ENCODE measurements at regions of chr17 and their contacts with region 1.

Region 1: DNA sequence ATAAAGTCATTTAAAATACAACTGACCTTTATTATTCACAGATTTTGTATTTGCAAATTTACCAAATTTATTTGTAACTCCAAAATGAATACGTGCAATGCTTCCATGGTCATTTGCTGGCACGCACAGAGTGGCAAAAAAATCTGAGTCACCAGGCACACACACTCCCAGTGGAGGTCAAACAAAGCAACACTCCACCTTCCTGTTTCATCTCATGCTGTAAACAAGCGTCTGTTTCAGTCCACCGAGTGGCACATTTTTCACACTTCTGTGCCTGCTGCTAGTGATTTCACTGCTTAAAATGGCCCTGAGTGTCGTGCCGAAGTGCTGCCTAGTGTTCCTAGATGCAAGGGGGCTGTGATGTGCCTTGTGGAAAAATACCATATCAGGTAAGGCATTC is 17.8 kb upstream of the ITGAE start:
- DNase-seq: peak; percentile 46
- H3K4me3 ChIP-seq: no peak overlapping the region
- H3K27ac ChIP-seq: no peak overlapping the region
- H3K4me1 ChIP-seq: no peaks in the 10 kb centered on the region
- H3K27me3 ChIP-seq: no peaks in the 10 kb centered on the region

Region 2: DNA sequence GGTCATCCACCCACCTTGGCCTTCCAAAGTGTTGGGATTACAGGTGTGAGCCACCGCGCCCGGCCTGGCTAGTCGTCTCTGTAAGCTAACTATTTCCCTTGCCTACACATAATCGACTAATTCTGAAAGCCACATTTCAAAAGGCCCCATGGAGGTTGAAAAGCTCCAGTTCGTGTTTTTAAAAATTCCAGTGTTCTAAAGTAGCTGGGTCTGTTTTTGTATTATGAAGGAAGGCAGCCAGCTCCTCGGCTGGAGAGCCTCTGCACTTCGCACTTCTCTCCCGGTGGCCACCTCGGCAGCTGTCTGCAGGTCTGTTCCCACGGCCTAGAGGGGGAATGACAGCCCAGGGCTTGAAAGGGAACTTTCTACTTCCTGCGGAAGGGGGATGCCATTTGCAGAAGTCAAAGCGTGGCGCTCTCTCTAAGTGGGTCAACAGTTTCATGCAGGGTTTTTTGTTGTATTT is 78.1 kb before region 1 on chr17:
- in situ Hi-C with region 1: loop called (anchors 10 kb)
- DNase-seq: no peak
- H3K4me3 ChIP-seq: no peak overlapping the region
- H3K27ac ChIP-seq: no peak overlapping the region
- H3K4me1 ChIP-seq: no peaks in the 10 kb centered on the region
- H3K27me3 ChIP-seq: no peaks in the 10 kb centered on the region

Measured in GM23248 (cell line).